Activated CD8-positive, alpha-beta T cell treated with anti-CD3 and anti-CD28 coated beads for 36 hours (primary cell): ENCODE measurements at regions of chr6 and their contacts with region 1.

Region 1: DNA sequence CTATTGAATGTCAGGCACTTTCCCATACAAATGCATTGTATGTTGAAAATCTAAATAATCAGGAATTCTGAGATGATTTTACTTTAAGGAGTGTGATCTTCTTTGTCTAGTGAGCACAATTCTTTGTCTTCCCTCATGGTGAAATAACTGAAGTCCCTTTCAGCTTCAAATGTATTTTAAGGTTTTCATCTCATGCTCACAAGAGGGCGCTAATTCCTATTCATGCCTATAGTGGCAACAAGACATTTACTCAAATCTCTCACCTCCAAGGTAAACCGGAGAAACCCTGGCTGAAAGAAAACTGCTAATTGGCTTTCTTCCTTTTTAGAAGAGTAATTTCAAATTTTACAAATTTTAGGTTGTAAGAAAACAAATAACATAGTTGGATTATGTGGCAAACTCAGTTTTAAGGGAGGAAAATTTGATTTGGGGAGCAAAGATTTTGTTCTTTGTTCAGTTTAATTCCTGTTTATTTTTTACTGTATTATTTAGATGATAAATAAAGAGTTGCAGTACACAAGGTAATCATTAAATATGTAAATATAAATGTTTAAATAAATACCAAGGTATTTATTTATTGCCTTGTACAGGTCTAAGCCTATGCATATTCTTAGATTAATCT is 69.1 kb downstream of the SLC35F1 start:
- DNase-seq: peak; percentile 5
- ATAC-seq: no peak
- H3K4me3 Mint-ChIP-seq: no peak overlapping the region
- H3K27ac Mint-ChIP-seq: no peak overlapping the region
- H3K4me1 Mint-ChIP-seq: no peaks in the 10 kb centered on the region
- H3K27me3 Mint-ChIP-seq: peaks cover 7% of the 10 kb centered on the region
- CTCF ChIP-seq: peak; percentile 75

Region 2: GRCh38 chr6:117810269-117810668 is 165.9 kb before region 1 on chr6:
- CTCF ChIA-PET with region 1: no interaction called
- POLR2A ChIA-PET with region 1: no interaction called
- intact Hi-C with region 1: no loop called
- DNase-seq: no peak
- ATAC-seq: no peak
- H3K4me3 Mint-ChIP-seq: no peak overlapping the region
- H3K27ac Mint-ChIP-seq: no peak overlapping the region
- H3K4me1 Mint-ChIP-seq: no peaks in the 10 kb centered on the region
- H3K27me3 Mint-ChIP-seq: peaks cover 4% of the 10 kb centered on the region
- CTCF ChIP-seq: no peak

Region 3: GRCh38 chr6:117919775-117920729 is 56.1 kb before region 1 on chr6:
- CTCF ChIA-PET with region 1: no interaction called
- POLR2A ChIA-PET with region 1: no interaction called
- intact Hi-C with region 1: no loop called
- DNase-seq: peak; percentile 11
- ATAC-seq: no peak
- H3K4me3 Mint-ChIP-seq: no peak overlapping the region
- H3K27ac Mint-ChIP-seq: no peak overlapping the region
- H3K4me1 Mint-ChIP-seq: no peaks in the 10 kb centered on the region
- H3K27me3 Mint-ChIP-seq: peaks cover 12% of the 10 kb centered on the region
- CTCF ChIP-seq: no peak

Region 4: GRCh38 chr6:117960877-117961276 is 15.3 kb before region 1 on chr6:
- CTCF ChIA-PET with region 1: interaction called, 14 read pairs
- POLR2A ChIA-PET with region 1: no interaction called
- intact Hi-C with region 1: no loop called
- DNase-seq: no peak
- ATAC-seq: no peak
- H3K4me3 Mint-ChIP-seq: no peak overlapping the region
- H3K27ac Mint-ChIP-seq: no peak overlapping the region
- H3K4me1 Mint-ChIP-seq: no peaks in the 10 kb centered on the region
- H3K27me3 Mint-ChIP-seq: peaks cover 5% of the 10 kb centered on the region
- CTCF ChIP-seq: no peak

Region 5: GRCh38 chr6:118252474-118252873 is 276.3 kb after region 1 on chr6:
- CTCF ChIA-PET with region 1: no interaction called
- POLR2A ChIA-PET with region 1: no interaction called
- intact Hi-C with region 1: loop called (anchors 10 kb)
- DNase-seq: no peak
- ATAC-seq: peak; percentile 69
- H3K4me3 Mint-ChIP-seq: no peak overlapping the region
- H3K27ac Mint-ChIP-seq: no peak overlapping the region
- H3K4me1 Mint-ChIP-seq: peaks cover 2% of the 10 kb centered on the region
- H3K27me3 Mint-ChIP-seq: peaks cover 5% of the 10 kb centered on the region
- CTCF ChIP-seq: no peak